Mammary epithelial cell (primary cell): ENCODE measurements at regions of chr19 and their contacts with region 1.

Region 1: DNA sequence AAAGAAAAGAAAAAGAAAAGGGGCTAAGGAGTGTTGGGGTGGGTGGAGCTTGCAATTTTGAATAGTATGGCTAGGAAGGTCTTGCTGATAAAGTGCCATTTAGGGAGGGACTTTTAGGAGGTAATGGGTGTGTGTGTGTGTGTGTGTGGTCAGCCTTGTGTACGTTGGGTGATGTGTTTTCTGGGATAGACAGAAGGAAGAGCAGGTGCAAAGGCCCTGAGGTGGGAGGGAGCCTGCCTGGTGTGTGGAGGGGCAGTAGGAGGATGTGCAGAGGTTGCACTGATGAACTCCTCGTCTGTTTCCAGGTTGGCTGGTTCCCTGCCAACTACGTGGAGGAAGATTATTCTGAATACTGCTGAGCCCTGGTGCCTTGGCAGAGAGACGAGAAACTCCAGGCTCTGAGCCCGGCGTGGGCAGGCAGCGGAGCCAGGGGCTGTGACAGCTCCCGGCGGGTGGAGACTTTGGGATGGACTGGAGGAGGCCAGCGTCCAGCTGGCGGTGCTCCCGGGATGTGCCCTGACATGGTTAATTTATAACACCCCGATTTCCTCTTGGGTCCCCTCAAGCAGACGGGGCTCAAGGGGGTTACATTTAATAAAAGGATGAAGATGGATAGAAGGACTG is 30.5 kb upstream of the ADGRE1 start:
- DNase-seq: no peak
- H3K4me3 ChIP-seq: no peak overlapping the region
- H3K27ac ChIP-seq: no peak overlapping the region
- H3K4me1 ChIP-seq: peaks cover 1% of the 10 kb centered on the region
- H3K27me3 ChIP-seq: no peaks in the 10 kb centered on the region
- CTCF ChIP-seq: no peak

Region 2: GRCh38 chr19:6811906-6812305 is 45.0 kb before region 1 on chr19:
- CTCF ChIA-PET with region 1: interaction called, 14 read pairs
- dilution Hi-C with region 1: no loop called
- in situ Hi-C with region 1: no loop called
- intact Hi-C with region 1: no loop called
- DNase-seq: peak; percentile 65
- H3K4me3 ChIP-seq: no peak overlapping the region
- H3K27ac ChIP-seq: no peak overlapping the region
- H3K4me1 ChIP-seq: no peaks in the 10 kb centered on the region
- H3K27me3 ChIP-seq: no peaks in the 10 kb centered on the region
- CTCF ChIP-seq: no peak